Endothelial cell of umbilical vein (primary cell): ENCODE measurements at regions of chr1 and their contacts with region 1.

Region 1: GRCh38 chr1:66242646-66243547 is 291.1 kb upstream of the SGIP1 start:
- DNase-seq: peak; percentile 85
- H3K4me3 ChIP-seq: no peak overlapping the region
- H3K27ac ChIP-seq: peak overlapping the region; percentile 64
- H3K4me1 ChIP-seq: peaks cover 26% of the 10 kb centered on the region
- H3K27me3 ChIP-seq: no peaks in the 10 kb centered on the region
- CTCF ChIP-seq: peak; percentile 98 to 100
- POLR2A ChIP-seq: no peak

Region 2: DNA sequence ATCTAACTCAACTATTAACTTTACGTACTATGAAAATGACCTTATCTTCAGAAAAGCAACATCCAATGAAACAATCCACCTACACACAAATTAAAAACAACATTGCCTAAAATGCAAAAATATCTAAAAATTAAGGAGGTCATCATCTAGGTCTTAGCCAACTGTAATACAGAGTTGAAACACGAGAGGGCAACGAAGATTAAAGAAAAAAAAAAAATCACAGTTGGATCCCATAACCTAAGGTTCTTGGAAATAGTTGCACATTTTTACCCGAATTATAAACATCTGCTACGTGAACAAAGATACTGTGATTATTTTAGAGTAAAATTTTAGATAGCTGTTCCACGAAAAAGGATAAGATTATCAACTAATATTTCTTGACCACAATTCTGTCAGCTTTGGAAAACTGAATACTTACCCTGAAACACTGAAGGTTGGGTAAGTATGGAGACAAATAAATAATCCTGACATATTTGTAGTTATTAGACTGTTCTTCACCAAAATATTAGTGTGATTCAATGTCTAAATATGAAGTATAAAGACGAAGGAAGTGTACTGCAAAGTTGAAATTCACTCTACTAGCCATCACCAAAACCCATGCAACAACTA is 1182.9 kb before region 1 on chr1:
- CTCF ChIA-PET with region 1: no interaction called
- POLR2A ChIA-PET with region 1: no interaction called
- dilution Hi-C with region 1: no loop called
- intact Hi-C with region 1: loop called (anchors 5 kb)
- DNase-seq: peak; percentile 69
- H3K4me3 ChIP-seq: no peak overlapping the region
- H3K27ac ChIP-seq: no peak overlapping the region
- H3K4me1 ChIP-seq: peaks cover 3% of the 10 kb centered on the region
- H3K27me3 ChIP-seq: no peaks in the 10 kb centered on the region
- CTCF ChIP-seq: peak; percentile 33 to 39
- POLR2A ChIP-seq: no peak

Region 3: GRCh38 chr1:65717815-65718454 is 525.0 kb before region 1 on chr1:
- CTCF ChIA-PET with region 1: interaction called, 41 read pairs
- POLR2A ChIA-PET with region 1: no interaction called
- dilution Hi-C with region 1: no loop called
- intact Hi-C with region 1: loop called (anchors 1 kb)
- DNase-seq: peak; percentile 36
- H3K4me3 ChIP-seq: no peak overlapping the region
- H3K27ac ChIP-seq: no peak overlapping the region
- H3K4me1 ChIP-seq: no peaks in the 10 kb centered on the region
- H3K27me3 ChIP-seq: peaks cover 0 to 3% of the 10 kb centered on the region in 2 experiments
- CTCF ChIP-seq: peak in 1 of 2 donors; percentile 5
- POLR2A ChIP-seq: no peak

Region 4: GRCh38 chr1:65952696-65953095 is 290.2 kb before region 1 on chr1:
- CTCF ChIA-PET with region 1: interaction called, 61 read pairs
- POLR2A ChIA-PET with region 1: no interaction called
- dilution Hi-C with region 1: no loop called
- intact Hi-C with region 1: no loop called
- DNase-seq: peak; percentile 42
- H3K4me3 ChIP-seq: no peak overlapping the region
- H3K27ac ChIP-seq: peak overlapping the region; percentile 67
- H3K4me1 ChIP-seq: peaks cover 17% of the 10 kb centered on the region
- H3K27me3 ChIP-seq: no peaks in the 10 kb centered on the region
- CTCF ChIP-seq: no peak
- POLR2A ChIP-seq: no peak

Region 5: GRCh38 chr1:65958561-65959350 is 284.1 kb before region 1 on chr1:
- CTCF ChIA-PET with region 1: interaction called, 116 read pairs
- POLR2A ChIA-PET with region 1: no interaction called
- dilution Hi-C with region 1: no loop called
- intact Hi-C with region 1: loop called (anchors 1 kb)
- DNase-seq: peak; percentile 73
- H3K4me3 ChIP-seq: no peak overlapping the region
- H3K27ac ChIP-seq: no peak overlapping the region
- H3K4me1 ChIP-seq: peaks cover 10% of the 10 kb centered on the region
- H3K27me3 ChIP-seq: no peaks in the 10 kb centered on the region
- CTCF ChIP-seq: peak; percentile 21 to 29
- POLR2A ChIP-seq: no peak